Lower leg skin (tissue), 4 donors: ENCODE measurements at regions of chr2 and their contacts with region 1.

Region 1: DNA sequence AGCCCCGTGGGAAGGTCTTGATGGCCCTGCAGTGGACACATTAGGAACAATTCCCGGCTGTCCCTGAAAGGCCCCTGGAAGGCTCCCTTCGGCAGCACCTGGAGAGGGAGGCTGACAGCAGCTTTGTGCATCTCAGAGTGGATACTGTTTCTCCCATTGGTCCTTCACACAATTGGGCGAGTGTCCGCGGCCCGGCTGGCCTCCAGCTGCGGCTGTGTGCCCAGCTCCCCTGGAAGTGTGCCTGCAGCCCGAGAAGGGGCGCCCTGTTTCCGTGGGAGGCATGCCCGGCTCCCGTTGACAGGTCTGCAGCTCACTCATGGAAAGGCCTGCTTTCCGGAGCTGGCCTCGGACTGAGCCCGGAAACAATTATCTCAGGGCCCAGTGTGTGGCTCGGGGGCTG is 103.7 kb downstream of the LPIN1 start:
- DNase-seq: no peak
- H3K4me3 ChIP-seq: no peak overlapping the region
- CTCF ChIP-seq: no peak
- POLR2A ChIP-seq: no peak

Region 2: GRCh38 chr2:13006829-13007717 is 1157.0 kb after region 1 on chr2:
- intact Hi-C with region 1: loop called (anchors 10 kb)
- DNase-seq: peak; percentile 61 to 89
- H3K4me3 ChIP-seq: no peak overlapping the region
- CTCF ChIP-seq: peak in 2 of 3 donors; percentile 20 to 59
- POLR2A ChIP-seq: no peak